ENCODE measurements at regions of chr7 and their contacts with region 1.

Region 1: GRCh38 chr7:155598810-155599210 is 45.7 kb upstream of the RBM33 start:
- DNase-seq: peak; percentile 44 to 85 (median 76)
- ATAC-seq: peak; percentile 70 to 79 (median 74)
- H3K4me3 ChIP-seq: no peak overlapping the region
- H3K4me3 Mint-ChIP-seq: no peak overlapping the region
- H3K27ac ChIP-seq: no peak overlapping the region
- H3K27ac Mint-ChIP-seq: no peak overlapping the region
- H3K4me1 ChIP-seq: peaks cover 2 to 4% of the 10 kb centered on the region in 2 experiments
- H3K4me1 Mint-ChIP-seq: peaks cover 3 to 6% (median 3%) of the 10 kb centered on the region in 3 donors
- H3K27me3 ChIP-seq: peaks cover 0 to 25% of the 10 kb centered on the region in 2 experiments
- H3K27me3 Mint-ChIP-seq: peaks cover 23 to 45% of the 10 kb centered on the region in 2 donors

Region 2: DNA sequence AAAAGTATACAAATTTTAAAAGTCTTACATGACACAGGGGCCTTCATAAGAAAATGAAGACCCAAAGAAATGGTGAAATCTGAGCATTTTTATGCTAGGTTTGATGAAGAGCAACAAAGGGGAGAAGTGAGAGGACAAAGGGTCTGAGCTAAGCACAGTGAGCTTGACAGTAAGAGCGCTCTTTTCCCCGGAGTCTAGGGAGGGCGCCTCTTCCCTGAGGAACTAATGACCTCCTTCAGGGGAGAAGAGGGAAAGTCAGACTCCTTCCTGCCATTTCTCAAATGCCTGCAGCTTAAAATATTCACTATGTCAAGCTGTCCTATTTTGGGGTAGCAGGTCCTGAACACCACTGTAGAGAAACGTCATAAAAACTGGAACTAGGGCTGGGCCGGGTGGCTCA is 577.8 kb before region 1 on chr7:
- CTCF ChIA-PET with region 1: interaction called in 1 of 2 experiments, 13 read pairs
- POLR2A ChIA-PET with region 1: no interaction called
- DNase-seq: no peak
- ATAC-seq: no peak
- H3K4me3 ChIP-seq: no peak overlapping the region
- H3K4me3 Mint-ChIP-seq: no peak overlapping the region
- H3K27ac ChIP-seq: no peak overlapping the region
- H3K27ac Mint-ChIP-seq: no peak overlapping the region
- H3K4me1 ChIP-seq: no peaks in the 10 kb centered on the region
- H3K4me1 Mint-ChIP-seq: no peaks in the 10 kb centered on the region
- H3K27me3 ChIP-seq: peaks cover 0 to 4% of the 10 kb centered on the region in 2 experiments
- H3K27me3 Mint-ChIP-seq: peaks cover 4 to 7% of the 10 kb centered on the region in 2 donors

Region 3: DNA sequence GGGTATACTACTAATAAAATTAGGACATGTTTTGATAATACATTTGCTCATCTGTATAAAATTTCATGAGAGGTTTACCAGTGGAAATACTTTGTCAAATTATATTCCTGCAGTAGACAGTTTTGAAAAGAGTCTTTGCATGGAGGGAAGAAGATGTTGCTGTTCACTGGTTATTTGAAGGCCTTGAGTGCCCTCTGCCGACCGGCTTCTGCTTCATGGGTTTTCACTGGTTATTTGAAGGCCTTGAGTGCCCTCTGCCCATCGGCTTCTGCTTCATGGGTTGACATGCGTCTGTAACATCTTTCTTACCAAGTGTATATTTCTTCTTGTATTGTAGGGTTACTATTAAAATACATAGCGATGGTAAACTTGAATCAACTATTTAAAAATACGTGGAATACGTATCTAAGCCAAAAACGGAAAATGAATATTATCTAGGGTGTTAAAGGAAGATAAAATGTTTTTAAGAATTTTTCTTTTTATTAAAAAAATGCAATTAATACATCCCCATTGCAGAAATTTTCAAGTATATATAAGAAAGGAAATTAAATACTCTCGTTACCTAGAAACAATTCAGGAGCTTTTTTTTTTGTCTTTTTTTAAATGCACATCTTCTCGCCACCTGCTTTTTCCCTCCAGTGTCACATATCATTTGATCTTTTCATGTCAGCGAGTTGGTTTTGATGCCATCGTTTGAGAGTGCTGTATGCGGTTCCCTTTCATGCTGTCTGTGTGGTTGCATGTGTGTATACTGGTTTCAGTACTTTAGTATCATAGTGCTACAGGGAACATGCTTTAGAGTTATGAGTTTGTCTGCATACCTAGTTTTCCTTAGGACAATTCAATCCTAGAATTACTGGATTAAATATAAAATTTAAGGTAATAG is 140.1 kb after region 1 on chr7:
- CTCF ChIA-PET with region 1: interaction called, 4 to 13 read pairs
- POLR2A ChIA-PET with region 1: no interaction called
- DNase-seq: peak; percentile 27 to 74 (median 60)
- ATAC-seq: peak; percentile 75 to 98 (median 86)
- H3K4me3 ChIP-seq: peak overlapping the region in 1 of 2 donors; percentile 20
- H3K4me3 Mint-ChIP-seq: peak overlapping the region in 1 of 3 donors; percentile 61
- H3K27ac ChIP-seq: no peak overlapping the region
- H3K27ac Mint-ChIP-seq: peak overlapping the region; percentile 65 to 77
- H3K4me1 ChIP-seq: peaks cover 2 to 13% of the 10 kb centered on the region in 2 experiments
- H3K4me1 Mint-ChIP-seq: peaks cover 37 to 52% (median 48%) of the 10 kb centered on the region in 3 donors
- H3K27me3 ChIP-seq: no peaks in the 10 kb centered on the region
- H3K27me3 Mint-ChIP-seq: no peaks in the 10 kb centered on the region

Region 4: DNA sequence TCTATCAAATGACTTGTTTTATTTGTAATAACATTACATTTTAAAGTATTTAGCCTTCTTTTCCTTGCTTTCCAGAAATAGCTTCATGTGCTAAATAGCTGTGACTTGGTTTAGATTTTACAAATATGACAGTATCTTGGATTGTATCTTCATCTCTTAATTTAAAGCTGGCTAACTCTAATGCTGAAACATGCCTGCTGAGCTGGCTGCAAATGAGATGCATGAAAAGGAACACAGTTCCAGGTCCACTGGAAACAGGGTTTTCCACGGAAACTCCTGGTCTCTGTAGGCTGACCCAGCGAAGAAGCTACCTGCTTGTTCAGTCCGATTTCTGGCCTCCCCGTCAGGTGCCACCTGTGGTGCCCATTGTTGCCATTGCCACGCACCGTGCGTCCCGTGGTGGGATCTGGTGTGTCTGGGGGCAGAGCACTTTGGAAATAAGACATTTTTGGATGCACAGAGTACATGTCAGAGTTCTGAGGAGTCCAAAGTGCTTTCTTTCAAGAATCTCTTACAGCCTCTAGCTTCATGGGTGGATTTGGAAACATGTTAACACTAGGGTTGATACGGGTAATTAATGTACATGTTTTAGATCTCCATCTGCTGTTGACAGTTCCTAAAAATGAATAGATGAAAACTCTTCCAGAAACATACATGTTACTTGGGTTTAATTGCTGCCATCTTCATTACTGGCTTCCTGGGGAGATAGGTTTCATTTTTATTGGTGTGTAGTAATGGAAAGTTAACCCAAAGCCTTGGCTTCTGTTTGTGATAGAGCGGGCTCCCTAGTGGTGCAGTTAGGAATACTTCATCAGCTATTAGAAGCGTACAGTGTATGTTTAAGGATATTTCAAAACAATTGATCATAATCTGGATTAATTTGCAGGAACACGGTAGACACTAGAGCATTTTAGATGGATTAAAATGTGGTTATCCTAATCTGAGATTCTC is 168.4 kb after region 1 on chr7:
- CTCF ChIA-PET with region 1: interaction called, 7 to 49 read pairs
- POLR2A ChIA-PET with region 1: interaction called in 1 of 2 experiments, 4 read pairs
- DNase-seq: no peak
- ATAC-seq: no peak
- H3K4me3 ChIP-seq: no peak overlapping the region
- H3K4me3 Mint-ChIP-seq: no peak overlapping the region
- H3K27ac ChIP-seq: no peak overlapping the region
- H3K27ac Mint-ChIP-seq: no peak overlapping the region
- H3K4me1 ChIP-seq: peaks cover 26% of the 10 kb centered on the region in 2 experiments
- H3K4me1 Mint-ChIP-seq: peaks cover 32 to 38% (median 33%) of the 10 kb centered on the region in 3 donors
- H3K27me3 ChIP-seq: no peaks in the 10 kb centered on the region
- H3K27me3 Mint-ChIP-seq: no peaks in the 10 kb centered on the region

Region 5: GRCh38 chr7:155774947-155775346 is 176.1 kb after region 1 on chr7:
- CTCF ChIA-PET with region 1: interaction called, 3 to 11 read pairs
- POLR2A ChIA-PET with region 1: interaction called in 1 of 2 experiments, 4 read pairs
- DNase-seq: no peak
- ATAC-seq: no peak
- H3K4me3 ChIP-seq: no peak overlapping the region
- H3K4me3 Mint-ChIP-seq: no peak overlapping the region
- H3K27ac ChIP-seq: no peak overlapping the region
- H3K27ac Mint-ChIP-seq: no peak overlapping the region
- H3K4me1 ChIP-seq: no peaks in the 10 kb centered on the region
- H3K4me1 Mint-ChIP-seq: peaks cover 0 to 6% (median 0%) of the 10 kb centered on the region in 3 donors
- H3K27me3 ChIP-seq: no peaks in the 10 kb centered on the region
- H3K27me3 Mint-ChIP-seq: no peaks in the 10 kb centered on the region

Region 6: GRCh38 chr7:155961241-155962190 is 362.7 kb after region 1 on chr7:
- CTCF ChIA-PET with region 1: no interaction called
- POLR2A ChIA-PET with region 1: no interaction called
- DNase-seq: no peak
- ATAC-seq: no peak
- H3K4me3 ChIP-seq: no peak overlapping the region
- H3K4me3 Mint-ChIP-seq: peak overlapping the region in 1 of 3 donors; percentile 22
- H3K27ac ChIP-seq: no peak overlapping the region
- H3K27ac Mint-ChIP-seq: no peak overlapping the region
- H3K4me1 ChIP-seq: peaks cover 0 to 11% of the 10 kb centered on the region in 2 experiments
- H3K4me1 Mint-ChIP-seq: peaks cover 4 to 11% (median 5%) of the 10 kb centered on the region in 3 donors
- H3K27me3 ChIP-seq: peaks cover 0 to 24% of the 10 kb centered on the region in 2 experiments
- H3K27me3 Mint-ChIP-seq: peaks cover 5 to 12% of the 10 kb centered on the region in 2 donors

Measured in T-cell (primary cell).